Left ventricle myocardium superior (tissue), 1 donor: ENCODE measurements at regions of chr5 and their contacts with region 1.

Region 1: DNA sequence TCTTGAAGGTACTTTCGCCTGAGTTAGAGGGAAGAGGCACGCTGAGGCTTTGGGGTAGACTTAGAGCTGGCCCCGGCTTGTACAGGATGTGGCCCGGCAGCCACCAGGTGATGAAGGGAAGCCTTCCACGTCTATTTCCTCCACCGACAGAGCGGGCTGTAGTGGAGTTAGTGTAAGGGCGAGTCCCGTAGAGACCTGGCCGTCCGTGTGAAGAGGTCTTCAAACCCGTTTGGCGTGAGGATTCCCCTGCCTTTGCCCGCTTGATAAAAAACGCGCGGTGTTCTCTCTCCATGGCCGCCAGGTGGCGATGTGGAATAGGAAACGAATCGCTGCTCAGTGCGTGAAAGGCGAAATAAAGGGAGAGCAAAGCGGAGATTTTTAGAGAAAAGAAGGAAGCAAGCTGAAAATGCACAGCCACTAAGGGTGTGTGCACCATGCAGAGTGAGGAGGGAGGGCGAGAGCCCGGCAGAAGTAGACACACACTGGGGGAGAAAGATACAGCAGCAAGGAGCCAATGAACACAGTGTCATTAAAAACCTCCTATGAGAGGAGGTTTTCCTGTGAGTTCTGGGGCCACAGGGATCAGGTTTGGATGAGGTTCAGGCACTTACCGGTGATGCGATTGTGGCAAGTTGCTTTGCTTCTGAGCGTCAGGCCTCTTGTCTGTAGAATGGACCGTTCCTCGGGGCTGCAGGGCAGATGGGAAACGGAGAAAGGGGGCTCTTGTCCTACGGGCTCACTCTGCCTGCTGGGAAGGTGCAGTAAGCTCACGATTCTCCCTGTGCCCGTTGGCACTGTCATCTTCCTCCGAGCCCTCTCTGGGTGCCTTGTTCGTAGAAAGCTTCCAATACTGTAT is 34.2 kb downstream of the STC2 start:
- DNase-seq: peak; percentile 83
- ATAC-seq: peak; percentile 58

Region 2: GRCh38 chr5:173331956-173332479 is 38.0 kb after region 1 on chr5:
- intact Hi-C with region 1: loop called (anchors 5 kb)
- DNase-seq: peak; percentile 92
- ATAC-seq: peak; percentile 70

Region 3: GRCh38 chr5:173573126-173573960 is 279.3 kb after region 1 on chr5:
- intact Hi-C with region 1: loop called (anchors 5 kb)
- DNase-seq: peak; percentile 88
- ATAC-seq: peak; percentile 96

Region 4: DNA sequence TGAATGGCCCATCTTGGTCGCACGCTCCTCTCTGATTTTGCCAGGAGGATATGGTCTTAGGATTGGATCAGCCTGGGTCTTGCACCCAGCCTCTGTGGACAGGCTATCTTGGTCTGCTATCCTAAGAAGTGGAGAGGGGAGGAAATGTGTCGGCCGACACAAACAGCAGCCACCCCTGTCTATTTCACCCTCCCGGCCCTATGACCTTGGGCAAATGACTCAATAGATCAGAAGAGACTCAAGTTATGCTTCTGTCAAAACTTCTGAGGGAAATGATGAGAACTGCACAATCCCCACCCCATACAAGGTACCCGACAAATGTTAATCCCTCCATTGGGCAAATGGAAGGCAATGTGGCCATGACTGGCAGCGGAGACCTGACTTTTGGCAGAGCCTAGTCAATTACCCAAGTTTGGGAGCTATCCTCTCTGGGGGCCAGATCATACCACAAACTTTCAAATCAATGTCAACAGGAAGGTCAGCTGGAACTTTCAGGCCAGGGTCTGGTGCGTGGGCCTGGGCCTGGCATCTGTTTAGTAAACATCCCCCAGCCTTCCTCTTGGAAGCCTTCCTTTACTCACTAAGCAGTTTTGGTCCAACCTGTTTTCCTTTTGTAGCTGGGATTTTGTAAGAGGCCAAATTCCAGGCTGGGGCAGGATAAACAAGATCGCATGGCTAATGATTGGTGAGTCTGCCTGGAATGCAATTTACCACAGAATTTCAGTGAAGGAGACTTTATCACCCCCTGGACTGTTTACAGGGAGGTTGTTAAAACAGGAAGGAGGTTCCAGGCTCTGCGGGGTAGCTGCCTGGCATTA is 529.9 kb after region 1 on chr5:
- intact Hi-C with region 1: no loop called
- DNase-seq: no peak
- ATAC-seq: no peak